H1 (cell line): ENCODE measurements at regions of chr3 and their contacts with region 1.

Region 1: DNA sequence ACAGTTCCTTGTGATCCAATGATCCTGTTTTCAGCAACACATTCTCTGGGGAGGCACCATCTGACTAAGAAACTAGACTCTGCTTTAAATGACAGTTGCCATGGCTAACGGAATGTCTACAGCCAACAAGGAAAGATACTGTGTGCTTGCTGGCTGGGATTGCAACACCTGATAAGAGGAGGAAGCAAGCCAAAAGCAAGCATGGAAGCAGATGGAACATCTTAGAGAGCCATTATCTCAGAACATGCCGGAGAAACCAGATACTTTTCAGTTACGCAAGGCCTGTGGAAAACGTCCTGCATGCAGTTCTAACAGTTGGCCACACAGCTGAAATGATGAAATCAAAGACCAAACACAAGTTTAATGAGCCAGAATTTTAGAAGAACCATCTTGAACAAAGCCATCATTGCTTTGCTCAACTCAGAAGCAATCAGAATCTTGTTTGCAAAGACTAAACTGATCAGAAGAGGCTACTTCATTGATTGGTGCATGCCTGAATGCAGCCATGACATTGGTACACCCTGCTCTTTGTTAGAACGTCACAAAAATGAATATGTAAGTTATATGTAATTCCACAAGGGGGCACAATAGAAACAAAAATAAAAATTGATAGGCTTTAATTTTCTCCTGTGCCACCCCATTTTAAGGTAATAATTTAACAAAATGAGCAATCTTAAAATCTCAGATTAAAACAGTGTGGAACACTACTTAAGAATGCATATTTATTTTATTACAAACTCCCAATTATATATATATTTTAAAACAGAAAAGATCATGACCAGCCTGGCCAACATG is 50.8 kb downstream of the GXYLT2 start:
- DNase-seq: no peak
- H3K4me3 ChIP-seq: no peak overlapping the region
- H3K27ac ChIP-seq: no peak overlapping the region
- H3K4me1 ChIP-seq: peaks cover 0 to 3% (median 2%) of the 10 kb centered on the region in 4 experiments; a peak in 4 of 7 replicates
- H3K27me3 ChIP-seq: no peaks in the 10 kb centered on the region
- CTCF ChIP-seq: peak in 2 of 3 experiments; percentile 43 to 52; a peak in 3 of 4 replicates
- EP300 ChIP-seq: no peak
- POLR2A ChIP-seq: no peak
- RAD21 ChIP-seq: peak; percentile 34 to 42

Region 2: GRCh38 chr3:72679540-72680198 is 259.0 kb before region 1 on chr3:
- CTCF ChIA-PET with region 1: no interaction called
- POLR2A ChIA-PET with region 1: no interaction called
- DNase-seq: no peak
- H3K4me3 ChIP-seq: no peak overlapping the region
- H3K27ac ChIP-seq: no peak overlapping the region
- H3K4me1 ChIP-seq: no peaks in the 10 kb centered on the region
- H3K27me3 ChIP-seq: no peaks in the 10 kb centered on the region
- CTCF ChIP-seq: no peak
- EP300 ChIP-seq: no peak
- POLR2A ChIP-seq: no peak
- RAD21 ChIP-seq: no peak

Region 3: DNA sequence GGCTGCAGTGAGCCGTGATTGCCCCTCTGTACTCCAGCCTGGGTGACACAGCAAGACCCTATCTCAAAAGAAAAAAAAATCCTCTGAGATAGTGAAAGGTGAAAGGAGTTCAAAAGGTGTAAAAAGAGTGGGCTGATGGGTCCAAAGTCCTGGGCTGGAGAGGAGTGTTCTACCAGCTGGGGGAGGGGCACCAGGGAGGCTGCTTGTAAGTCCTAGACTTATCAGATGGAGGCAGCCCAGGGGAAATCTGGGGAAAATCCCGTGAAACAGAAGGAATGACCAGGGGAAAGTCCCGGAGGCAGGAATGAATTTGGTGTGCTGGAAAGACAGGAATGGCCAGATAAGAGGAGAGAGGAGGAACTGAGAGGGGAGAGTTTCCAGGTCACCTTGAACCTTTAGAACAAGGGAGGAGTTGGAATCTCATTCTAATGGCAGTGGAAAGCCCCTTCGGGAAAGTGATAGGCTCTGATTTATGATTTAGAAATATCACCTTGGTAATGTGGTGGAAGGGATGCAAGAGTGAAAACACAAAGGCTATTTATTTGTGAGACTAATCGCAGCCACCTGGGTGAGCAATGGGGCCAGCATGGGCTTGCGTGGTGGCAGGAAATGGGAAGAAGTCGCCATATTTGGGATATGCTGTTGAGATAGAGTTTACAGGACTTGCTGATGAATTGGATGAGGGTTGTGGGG is 34.5 kb after region 1 on chr3:
- CTCF ChIA-PET with region 1: no interaction called
- POLR2A ChIA-PET with region 1: no interaction called
- DNase-seq: no peak
- H3K4me3 ChIP-seq: no peak overlapping the region
- H3K27ac ChIP-seq: peak overlapping the region; percentile 40; the same call in 1 of the 2 replicates
- H3K4me1 ChIP-seq: no peaks in the 10 kb centered on the region; a peak in 1 of 7 replicates
- H3K27me3 ChIP-seq: no peaks in the 10 kb centered on the region
- CTCF ChIP-seq: no peak
- EP300 ChIP-seq: no peak
- POLR2A ChIP-seq: no peak
- RAD21 ChIP-seq: 0 out of 4 replicates have a peak, but pooled peaks of 1 of the 2 experiments have one; percentile 2

Region 4: GRCh38 chr3:73056014-73056844 is 117.6 kb after region 1 on chr3:
- CTCF ChIA-PET with region 1: interaction called, 41 read pairs
- POLR2A ChIA-PET with region 1: no interaction called
- DNase-seq: no peak
- H3K4me3 ChIP-seq: no peak overlapping the region
- H3K27ac ChIP-seq: no peak overlapping the region
- H3K4me1 ChIP-seq: no peaks in the 10 kb centered on the region
- H3K27me3 ChIP-seq: no peaks in the 10 kb centered on the region
- CTCF ChIP-seq: peak in 2 of 3 experiments; percentile 6 to 26; a peak in 2 of 4 replicates
- EP300 ChIP-seq: no peak
- POLR2A ChIP-seq: no peak
- RAD21 ChIP-seq: peak; percentile 62 to 64